Heart left ventricle (tissue), 16 donors: ENCODE measurements at regions of chr12 and their contacts with region 1.

Region 1: GRCh38 chr12:117212563-117213190 is 22.4 kb upstream of the FBXO21 start:
- DNase-seq: peak in 4 of 5 donors; percentile 46 to 65 (median 54)
- ATAC-seq: peak; percentile 61 to 84 (median 72)
- H3K4me3 ChIP-seq: no peak overlapping the region
- H3K27ac ChIP-seq: no peak overlapping the region
- H3K4me1 ChIP-seq: no peaks in the 10 kb centered on the region
- H3K27me3 ChIP-seq: peaks cover 0 to 25% (median 5%) of the 10 kb centered on the region in 9 donors
- CTCF ChIP-seq: peak in 11 of 12 donors; percentile 77 to 91 (median 85)
- POLR2A ChIP-seq: no peak

Region 2: DNA sequence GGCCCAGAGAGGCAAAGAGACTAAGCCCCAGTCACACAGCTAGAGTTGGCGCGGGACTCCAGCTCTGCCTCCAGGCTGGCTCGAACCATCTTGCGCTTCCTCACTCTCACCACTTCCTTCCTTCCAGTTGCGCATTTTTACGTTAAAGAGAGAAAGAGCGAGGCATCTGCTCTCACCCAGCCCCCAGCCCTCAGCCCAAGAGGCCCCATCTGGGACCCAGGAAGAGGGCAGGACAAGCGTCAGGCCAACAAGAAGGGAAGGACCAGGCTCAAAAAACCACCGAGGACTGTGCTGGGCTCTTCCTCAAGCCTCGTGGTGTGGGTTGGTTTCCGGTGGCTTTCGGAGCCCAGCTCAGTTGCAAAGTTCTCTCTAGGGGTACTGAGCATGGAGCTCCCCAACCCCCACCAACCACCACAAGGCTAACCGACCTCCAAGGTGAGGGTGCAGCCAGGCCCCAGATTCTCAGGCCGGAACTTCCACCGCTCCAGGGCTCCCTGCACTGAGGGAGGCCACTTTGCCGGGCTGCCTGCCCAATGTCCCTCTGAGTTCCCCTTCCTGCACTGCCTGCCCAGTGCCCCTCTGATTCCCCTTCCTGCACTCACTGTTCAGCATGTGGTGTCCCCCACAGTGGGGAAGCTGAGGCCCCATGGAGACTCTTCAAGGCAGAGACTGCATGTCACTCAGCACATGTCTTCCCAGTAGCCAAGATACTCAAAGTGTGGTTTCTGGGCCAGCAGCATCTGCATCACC is 149.3 kb before region 1 on chr12:
- intact Hi-C with region 1: no loop called
- DNase-seq: peak in 4 of 5 donors; percentile 46 to 60 (median 50)
- ATAC-seq: peak; percentile 12 to 71 (median 24)
- H3K4me3 ChIP-seq: peak overlapping the region in 1 of 12 donors; percentile 12
- H3K27ac ChIP-seq: peak overlapping the region in 6 of 12 donors; percentile 11 to 86 (median 44)
- H3K4me1 ChIP-seq: peaks cover 0 to 66% (median 21%) of the 10 kb centered on the region in 12 donors
- H3K27me3 ChIP-seq: no peaks in the 10 kb centered on the region
- CTCF ChIP-seq: no peak
- POLR2A ChIP-seq: no peak

Region 3: DNA sequence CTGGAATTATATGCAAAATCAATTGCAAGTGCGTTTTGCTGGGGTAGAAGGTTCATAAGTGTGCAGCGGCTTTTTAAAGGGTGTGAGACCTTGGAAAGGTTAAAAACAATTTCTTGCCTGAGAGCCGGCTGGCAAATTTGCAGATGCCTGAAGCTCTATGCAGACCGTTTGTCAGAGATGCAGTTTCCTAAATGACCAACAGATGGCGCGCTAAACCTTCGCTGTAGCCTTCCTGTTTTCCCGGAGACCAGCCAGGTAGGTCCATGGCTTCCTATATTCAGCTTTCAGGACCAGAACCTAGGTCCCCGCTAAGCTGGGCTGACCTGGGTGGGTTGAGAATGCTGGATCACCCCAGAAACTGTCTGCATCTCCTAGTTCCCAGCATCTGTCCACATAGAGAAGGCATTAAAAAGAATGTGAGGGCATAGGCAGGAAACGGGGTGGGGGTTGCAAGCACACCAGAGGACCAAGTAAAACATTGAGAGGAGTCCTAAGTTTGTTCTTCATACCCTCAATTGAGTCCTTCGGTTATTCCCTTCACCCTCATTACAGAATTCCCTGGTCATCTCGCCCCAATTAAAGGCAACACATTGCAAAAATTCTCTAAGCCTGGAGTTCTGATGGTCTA is 154.4 kb after region 1 on chr12:
- intact Hi-C with region 1: loop called in 1 of 10 experiments (anchors 5 kb)
- DNase-seq: peak in 4 of 5 donors; percentile 42 to 60 (median 46)
- ATAC-seq: peak in 3 of 4 donors; percentile 59 to 67 (median 62)
- H3K4me3 ChIP-seq: no peak overlapping the region
- H3K27ac ChIP-seq: no peak overlapping the region
- H3K4me1 ChIP-seq: no peaks in the 10 kb centered on the region
- H3K27me3 ChIP-seq: peaks cover 0 to 45% (median 17%) of the 10 kb centered on the region in 9 donors
- CTCF ChIP-seq: peak; percentile 72 to 87 (median 82)
- POLR2A ChIP-seq: no peak

Region 4: GRCh38 chr12:117430246-117430645 is 217.6 kb after region 1 on chr12:
- intact Hi-C with region 1: no loop called
- DNase-seq: no peak
- ATAC-seq: no peak
- H3K4me3 ChIP-seq: no peak overlapping the region
- H3K27ac ChIP-seq: no peak overlapping the region
- H3K4me1 ChIP-seq: no peaks in the 10 kb centered on the region
- H3K27me3 ChIP-seq: no peaks in the 10 kb centered on the region
- CTCF ChIP-seq: no peak
- POLR2A ChIP-seq: no peak

Region 5: DNA sequence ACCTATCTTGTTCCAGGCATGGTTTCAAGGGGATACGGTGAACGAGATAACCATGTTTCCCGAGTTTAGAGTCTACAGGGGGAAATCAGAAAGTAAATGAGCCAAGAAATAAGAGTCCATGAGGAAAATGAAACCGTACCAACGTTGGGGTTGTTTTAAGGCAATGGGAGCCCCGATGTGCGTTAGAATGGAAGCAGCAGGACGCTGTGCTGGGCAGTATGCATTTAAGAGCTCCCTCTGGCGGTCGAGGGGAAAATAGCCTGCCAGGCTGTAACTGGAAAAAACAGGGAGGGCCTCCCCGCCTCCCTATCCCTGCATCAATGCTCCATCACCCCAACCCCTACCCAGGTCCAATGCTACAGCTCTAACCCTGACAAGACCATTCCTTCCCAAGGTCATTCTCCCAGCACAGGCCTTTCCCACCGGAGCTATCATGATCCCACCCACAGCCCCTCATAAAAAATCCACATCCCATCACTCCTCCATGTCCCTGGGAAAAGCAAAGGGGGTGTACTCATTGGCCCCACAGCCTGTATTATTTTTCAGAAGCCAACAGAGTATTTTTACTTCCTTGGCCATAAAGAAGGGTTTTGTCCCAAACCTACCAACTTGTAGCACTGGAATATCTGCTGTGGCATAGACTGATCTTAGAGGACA is 375.1 kb after region 1 on chr12:
- intact Hi-C with region 1: loop called in 6 of 10 experiments (anchors 5 to 10 kb)
- DNase-seq: peak in 4 of 5 donors; percentile 19 to 53 (median 34)
- ATAC-seq: peak in 3 of 4 donors; percentile 50 to 67 (median 65)
- H3K4me3 ChIP-seq: no peak overlapping the region
- H3K27ac ChIP-seq: no peak overlapping the region
- H3K4me1 ChIP-seq: no peaks in the 10 kb centered on the region
- H3K27me3 ChIP-seq: peaks cover 0 to 43% (median 14%) of the 10 kb centered on the region in 9 donors
- CTCF ChIP-seq: peak; percentile 64 to 85 (median 80)
- POLR2A ChIP-seq: no peak

Region 6: GRCh38 chr12:117850048-117850447 is 637.4 kb after region 1 on chr12:
- intact Hi-C with region 1: loop called in 2 of 10 experiments (anchors 5 kb)
- DNase-seq: no peak
- ATAC-seq: no peak
- H3K4me3 ChIP-seq: no peak overlapping the region
- H3K27ac ChIP-seq: no peak overlapping the region
- H3K4me1 ChIP-seq: no peaks in the 10 kb centered on the region
- H3K27me3 ChIP-seq: peaks cover 0 to 41% (median 9%) of the 10 kb centered on the region in 9 donors
- CTCF ChIP-seq: peak; percentile 61 to 86 (median 76)
- POLR2A ChIP-seq: no peak

Region 7: GRCh38 chr12:117857632-117858612 is 645.2 kb after region 1 on chr12:
- intact Hi-C with region 1: loop called in 2 of 10 experiments (anchors 5 kb)
- DNase-seq: no peak
- ATAC-seq: no peak
- H3K4me3 ChIP-seq: no peak overlapping the region
- H3K27ac ChIP-seq: no peak overlapping the region
- H3K4me1 ChIP-seq: no peaks in the 10 kb centered on the region
- H3K27me3 ChIP-seq: peaks cover 0 to 26% (median 0%) of the 10 kb centered on the region in 9 donors
- CTCF ChIP-seq: peak in 11 of 12 donors; percentile 24 to 64 (median 53)
- POLR2A ChIP-seq: no peak